ENCODE measurements at regions of chr17 and their contacts with region 1.

Region 1: DNA sequence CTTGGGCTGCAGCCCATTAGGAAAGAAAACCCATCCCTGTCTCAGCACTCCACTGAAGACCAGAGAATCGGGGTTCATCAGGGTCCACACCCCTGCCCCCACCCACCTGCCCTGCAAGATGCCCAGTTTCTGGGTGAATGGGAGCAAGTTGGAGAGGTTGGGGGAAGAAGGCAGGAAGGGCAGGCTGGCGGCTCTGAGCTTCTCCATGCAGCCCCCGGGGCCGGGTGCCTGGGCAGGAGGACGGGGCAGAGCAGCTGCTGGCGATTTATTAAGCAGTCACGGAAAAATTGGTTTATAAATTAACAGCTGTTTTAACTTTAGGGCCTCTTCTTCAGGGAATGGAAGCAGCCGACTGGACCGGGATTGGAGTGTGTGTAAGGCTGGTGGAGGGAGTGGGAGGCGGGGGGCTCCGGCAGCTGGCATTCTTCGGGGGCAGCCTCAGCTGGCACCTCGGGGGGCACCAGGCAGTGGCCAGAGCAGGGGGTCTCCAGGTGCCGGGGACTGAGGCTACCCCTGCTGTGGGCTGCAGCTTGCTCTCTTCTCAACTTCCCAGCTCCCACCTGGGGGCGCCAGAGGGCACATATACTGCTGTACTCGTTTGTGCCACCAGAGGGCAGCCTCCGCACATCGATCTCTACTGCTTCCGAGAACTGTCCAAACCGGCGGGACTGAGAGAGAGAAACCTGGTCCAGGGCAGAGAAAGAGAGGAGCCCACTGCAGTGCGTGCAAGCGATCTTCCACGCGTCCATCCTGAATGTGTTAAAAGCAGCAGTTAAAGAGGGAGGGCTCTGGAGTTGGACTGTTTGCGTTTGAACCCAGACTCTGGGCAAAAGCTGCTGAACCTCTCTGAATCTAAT is 5.0 kb upstream of the PPP1R1B start:
- DNase-seq: peak; percentile 92
- ATAC-seq: peak; percentile 89
- H3K4me3 ChIP-seq: no peak overlapping the region
- H3K27ac ChIP-seq: no peak overlapping the region
- H3K4me1 ChIP-seq: peaks cover 9% of the 10 kb centered on the region
- H3K27me3 ChIP-seq: peaks cover 23% of the 10 kb centered on the region
- CTCF ChIP-seq: peak; percentile 99

Region 2: DNA sequence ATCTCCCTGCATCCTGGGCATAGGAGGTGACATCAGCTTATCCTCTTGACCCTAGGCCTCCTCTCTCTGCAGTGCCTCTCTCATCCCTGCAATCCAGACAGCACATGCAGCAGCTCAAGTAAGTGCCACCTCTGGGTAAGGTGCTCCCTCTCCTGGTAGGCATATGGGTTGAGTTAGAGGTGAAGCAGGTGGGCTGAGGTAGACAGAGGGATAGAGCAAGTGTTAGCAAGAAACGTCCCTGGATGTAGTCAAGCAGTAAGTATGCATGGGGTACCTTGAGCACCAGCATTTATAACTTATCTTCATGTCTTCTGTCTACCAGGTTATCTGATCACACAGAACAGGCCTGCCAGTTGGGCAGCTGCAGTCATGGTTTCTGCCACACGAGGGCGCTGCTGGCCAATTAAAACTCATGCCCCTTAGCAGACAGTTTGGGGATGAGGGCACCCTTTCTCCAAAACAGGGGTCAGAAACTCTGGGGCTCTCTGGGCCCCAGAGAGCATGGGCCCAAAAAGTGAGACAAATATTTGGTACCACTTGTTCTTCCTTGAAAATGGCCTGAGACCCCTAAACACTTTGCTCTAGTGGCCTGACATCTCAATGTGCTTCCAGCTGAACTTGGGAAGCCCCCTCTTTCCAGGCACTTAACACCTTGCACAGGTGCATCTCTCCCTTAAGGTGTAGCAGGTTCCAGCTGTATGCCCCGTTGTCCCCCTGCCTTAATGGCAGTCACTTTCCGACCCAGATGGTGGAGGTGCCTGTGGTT is 73.9 kb before region 1 on chr17:
- intact Hi-C with region 1: loop called (anchors 5 kb)
- DNase-seq: peak; percentile 78
- ATAC-seq: peak; percentile 83
- H3K4me3 ChIP-seq: no peak overlapping the region
- H3K27ac ChIP-seq: no peak overlapping the region
- H3K4me1 ChIP-seq: peaks cover 7% of the 10 kb centered on the region
- H3K27me3 ChIP-seq: no peaks in the 10 kb centered on the region
- CTCF ChIP-seq: peak; percentile 93

Region 3: GRCh38 chr17:39754161-39754951 is 132.6 kb after region 1 on chr17:
- intact Hi-C with region 1: loop called (anchors 10 kb)
- DNase-seq: peak; percentile 99
- ATAC-seq: peak; percentile 94
- H3K4me3 ChIP-seq: peak overlapping the region; percentile 64
- H3K27ac ChIP-seq: peak overlapping the region; percentile 98
- H3K4me1 ChIP-seq: peaks cover 13% of the 10 kb centered on the region
- H3K27me3 ChIP-seq: no peaks in the 10 kb centered on the region
- CTCF ChIP-seq: peak; percentile 90